ENCODE measurements at regions of chr10 and their contacts with region 1.

Region 1: GRCh38 chr10:78302989-78303854 is 269.6 kb downstream of the RPS24 start:
- DNase-seq: peak; percentile 94 to 97 (median 95)
- ATAC-seq: peak; percentile 96 to 99 (median 98)
- H3K4me3 ChIP-seq: peak overlapping the region; percentile 12 to 68 (median 60)
- H3K27ac ChIP-seq: peak overlapping the region; percentile 83 to 92 (median 87)
- H3K4me1 ChIP-seq: peaks cover 0 to 20% (median 11%) of the 10 kb centered on the region in 12 donors
- H3K27me3 ChIP-seq: no peaks in the 10 kb centered on the region
- CTCF ChIP-seq: peak; percentile 59 to 81 (median 69)
- POLR2A ChIP-seq: peak; percentile 3 to 78

Region 2: GRCh38 chr10:77160679-77161078 is 1142.5 kb before region 1 on chr10:
- intact Hi-C with region 1: no loop called
- DNase-seq: no peak
- ATAC-seq: no peak
- H3K4me3 ChIP-seq: no peak overlapping the region
- H3K27ac ChIP-seq: no peak overlapping the region
- H3K4me1 ChIP-seq: peaks cover 0 to 18% (median 0%) of the 10 kb centered on the region in 12 donors
- H3K27me3 ChIP-seq: peaks cover 0 to 11% (median 3%) of the 10 kb centered on the region in 9 donors
- CTCF ChIP-seq: no peak
- POLR2A ChIP-seq: no peak

Region 3: DNA sequence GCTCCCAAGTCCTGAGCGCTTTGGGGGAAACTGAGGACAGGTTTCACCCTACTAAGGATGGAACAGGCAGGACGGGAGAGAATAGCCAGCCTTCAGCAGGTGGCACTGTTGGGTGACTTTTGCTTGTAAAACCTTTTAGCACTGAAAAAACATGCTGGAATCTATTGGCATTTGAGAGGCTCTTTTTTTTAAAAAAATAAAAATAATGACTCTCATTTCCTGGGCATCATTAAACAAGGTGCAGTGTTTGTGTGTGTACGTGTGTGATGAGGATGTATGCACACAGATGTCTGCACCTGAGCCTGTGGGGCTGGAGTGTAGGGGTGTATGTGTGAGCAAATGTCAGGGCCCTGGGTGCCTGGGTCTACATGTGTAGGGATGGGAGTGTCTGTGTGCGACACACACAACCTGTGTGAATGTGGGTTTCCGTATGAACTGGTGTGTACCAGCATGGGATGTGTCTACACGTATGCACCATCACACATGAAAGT is 91.6 kb before region 1 on chr10:
- intact Hi-C with region 1: loop called in 5 of 10 experiments (anchors 1 to 5 kb)
- DNase-seq: peak in 1 of 5 donors; percentile 47
- ATAC-seq: peak in 3 of 4 donors; percentile 5 to 18 (median 9)
- H3K4me3 ChIP-seq: no peak overlapping the region
- H3K27ac ChIP-seq: peak overlapping the region in 5 of 12 donors; percentile 19 to 62 (median 52)
- H3K4me1 ChIP-seq: peaks cover 0 to 38% (median 19%) of the 10 kb centered on the region in 12 donors
- H3K27me3 ChIP-seq: no peaks in the 10 kb centered on the region
- CTCF ChIP-seq: peak in 11 of 12 donors; percentile 21 to 69 (median 55)
- POLR2A ChIP-seq: no peak

Region 4: GRCh38 chr10:78407009-78407711 is 103.9 kb after region 1 on chr10:
- intact Hi-C with region 1: loop called in 1 of 10 experiments (anchors 5 kb)
- DNase-seq: peak; percentile 77 to 88 (median 83)
- ATAC-seq: peak; percentile 50 to 77 (median 70)
- H3K4me3 ChIP-seq: peak overlapping the region in 10 of 12 donors; percentile 16 to 51 (median 36)
- H3K27ac ChIP-seq: peak overlapping the region in 9 of 12 donors; percentile 50 to 94 (median 81)
- H3K4me1 ChIP-seq: peaks cover 0 to 45% (median 27%) of the 10 kb centered on the region in 12 donors
- H3K27me3 ChIP-seq: peaks cover 0 to 12% (median 0%) of the 10 kb centered on the region in 9 donors
- CTCF ChIP-seq: no peak
- POLR2A ChIP-seq: no peak

Region 5: DNA sequence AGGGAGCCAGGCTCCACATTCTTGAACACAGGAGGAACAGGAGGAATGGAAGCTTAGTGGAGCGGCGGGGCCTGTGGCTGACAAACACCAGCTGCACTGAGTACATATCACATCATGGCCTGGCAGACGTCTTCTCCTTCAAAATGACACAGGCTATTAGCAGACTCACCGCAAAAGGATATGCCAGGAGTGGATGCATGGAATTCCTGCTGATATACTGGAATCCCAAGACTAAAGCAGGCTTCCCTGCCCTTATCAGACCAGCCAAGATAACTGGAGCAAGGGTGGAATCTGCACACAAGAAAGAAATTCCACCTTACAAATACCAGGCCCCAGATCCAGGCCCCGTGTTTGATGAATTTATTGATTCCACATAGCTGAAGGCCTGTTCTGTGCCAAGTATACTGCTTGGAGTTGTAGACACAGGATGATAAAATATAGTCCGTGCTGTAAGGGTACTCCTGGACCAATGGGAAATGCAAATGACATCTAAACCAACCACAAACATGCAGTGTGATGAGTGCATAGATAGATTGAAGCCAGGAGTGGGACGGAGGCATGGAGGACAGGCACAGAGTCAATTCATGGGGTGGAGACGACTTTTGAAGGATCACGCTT is 285.1 kb after region 1 on chr10:
- intact Hi-C with region 1: loop called in 1 of 10 experiments (anchors 5 kb)
- DNase-seq: peak; percentile 67 to 86 (median 76)
- ATAC-seq: peak; percentile 94 to 96 (median 96)
- H3K4me3 ChIP-seq: no peak overlapping the region
- H3K27ac ChIP-seq: peak overlapping the region in 9 of 12 donors; percentile 31 to 76 (median 61)
- H3K4me1 ChIP-seq: peaks cover 0 to 40% (median 18%) of the 10 kb centered on the region in 12 donors
- H3K27me3 ChIP-seq: no peaks in the 10 kb centered on the region
- CTCF ChIP-seq: no peak
- POLR2A ChIP-seq: no peak

Region 6: DNA sequence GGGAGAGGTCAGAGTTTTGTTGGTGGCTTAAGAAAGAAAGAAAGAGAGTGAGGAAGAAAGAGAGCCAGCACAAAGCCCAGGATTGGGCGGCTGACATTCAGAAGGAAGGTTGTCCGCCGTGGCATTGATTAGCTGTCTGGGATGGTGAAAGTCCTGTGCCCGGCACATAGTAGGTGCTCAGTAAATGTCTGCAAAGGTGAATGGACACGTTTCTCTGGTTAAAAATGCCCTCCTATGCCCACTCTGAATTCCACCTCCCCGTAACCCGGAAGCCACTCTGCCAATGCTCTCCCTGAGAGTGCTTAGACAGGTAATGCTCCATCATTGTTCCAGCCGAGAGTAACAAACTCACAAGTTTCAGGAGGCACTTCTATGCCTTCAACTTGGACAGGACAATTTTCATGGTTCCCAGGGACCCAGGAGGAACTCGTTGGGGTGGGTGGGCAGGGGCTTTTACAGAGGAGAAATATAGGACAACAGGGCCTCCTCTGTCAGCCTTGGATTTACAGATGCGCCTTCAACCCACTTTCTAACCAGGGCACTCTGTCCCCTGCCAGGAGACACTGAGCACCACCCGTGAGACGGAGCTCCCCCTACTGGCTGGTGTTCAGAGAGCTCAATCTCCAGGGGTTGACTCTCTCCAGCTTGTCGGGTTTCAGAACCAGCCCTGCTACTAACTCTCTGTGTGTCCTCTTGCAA is 354.1 kb after region 1 on chr10:
- intact Hi-C with region 1: loop called in 6 of 10 experiments (anchors 5 to 10 kb)
- DNase-seq: peak; percentile 72 to 84 (median 76)
- ATAC-seq: peak; percentile 81 to 94 (median 92)
- H3K4me3 ChIP-seq: no peak overlapping the region
- H3K27ac ChIP-seq: peak overlapping the region in 1 of 12 donors; percentile 45
- H3K4me1 ChIP-seq: peaks cover 0 to 5% (median 0%) of the 10 kb centered on the region in 12 donors
- H3K27me3 ChIP-seq: no peaks in the 10 kb centered on the region
- CTCF ChIP-seq: peak; percentile 55 to 77 (median 66)
- POLR2A ChIP-seq: no peak

Region 7: DNA sequence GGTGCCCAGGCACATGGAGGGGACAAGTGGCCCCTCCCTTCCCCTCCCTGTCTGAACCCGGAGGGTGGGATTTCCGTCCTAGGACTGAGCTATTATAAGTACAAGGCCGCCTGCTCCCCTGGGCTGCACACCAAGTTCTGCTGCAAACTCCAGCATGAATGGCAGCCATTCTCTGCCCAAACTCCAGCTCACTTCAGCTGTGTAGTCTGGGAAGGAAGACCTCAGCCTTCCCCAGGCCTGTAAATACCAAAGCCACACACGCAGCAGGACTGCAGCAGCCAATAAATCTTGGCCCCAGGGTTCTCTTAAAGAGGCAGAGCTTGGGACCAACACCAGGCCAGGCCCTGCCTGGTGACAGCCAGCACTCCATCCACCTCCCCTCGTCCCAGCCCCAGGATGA is 474.2 kb after region 1 on chr10:
- intact Hi-C with region 1: loop called in 1 of 10 experiments (anchors 10 kb)
- DNase-seq: peak in 4 of 5 donors; percentile 66 to 83 (median 74)
- ATAC-seq: peak; percentile 80 to 84 (median 82)
- H3K4me3 ChIP-seq: no peak overlapping the region
- H3K27ac ChIP-seq: peak overlapping the region; percentile 37 to 88 (median 77)
- H3K4me1 ChIP-seq: peaks cover 4 to 50% (median 26%) of the 10 kb centered on the region in 12 donors
- H3K27me3 ChIP-seq: no peaks in the 10 kb centered on the region
- CTCF ChIP-seq: no peak
- POLR2A ChIP-seq: no peak

Measured in heart left ventricle (tissue), 16 donors.